ENCODE measurements at regions of chr13 and their contacts with region 1.

Region 1: DNA sequence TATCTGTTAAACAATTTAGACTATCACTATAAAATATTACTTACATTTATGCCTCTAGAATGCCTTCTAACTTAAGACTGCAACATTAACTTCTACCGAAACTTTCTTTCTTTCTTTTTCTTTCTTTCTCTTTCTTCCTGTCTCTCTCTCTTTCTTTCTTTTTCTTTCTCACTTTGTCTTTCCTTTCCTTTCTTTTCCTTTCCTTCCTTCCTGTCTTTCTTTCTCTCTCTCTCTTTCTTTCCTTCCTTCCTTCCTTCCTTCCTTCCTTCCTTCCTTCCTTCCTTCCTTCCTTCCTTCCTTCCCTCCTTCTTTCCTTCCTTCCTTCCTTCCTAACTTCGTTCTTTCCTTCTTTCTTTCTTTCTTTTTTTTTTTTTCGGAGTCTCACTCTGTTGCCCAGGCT is 1071.9 kb upstream of the ATXN8OS start:
- DNase-seq: no peak
- H3K4me3 ChIP-seq: no peak overlapping the region
- H3K27ac ChIP-seq: no peak overlapping the region
- H3K4me1 ChIP-seq: no peaks in the 10 kb centered on the region
- H3K27me3 ChIP-seq: no peaks in the 10 kb centered on the region
- CTCF ChIP-seq: no peak
- POLR2A ChIP-seq: no peak

Region 2: DNA sequence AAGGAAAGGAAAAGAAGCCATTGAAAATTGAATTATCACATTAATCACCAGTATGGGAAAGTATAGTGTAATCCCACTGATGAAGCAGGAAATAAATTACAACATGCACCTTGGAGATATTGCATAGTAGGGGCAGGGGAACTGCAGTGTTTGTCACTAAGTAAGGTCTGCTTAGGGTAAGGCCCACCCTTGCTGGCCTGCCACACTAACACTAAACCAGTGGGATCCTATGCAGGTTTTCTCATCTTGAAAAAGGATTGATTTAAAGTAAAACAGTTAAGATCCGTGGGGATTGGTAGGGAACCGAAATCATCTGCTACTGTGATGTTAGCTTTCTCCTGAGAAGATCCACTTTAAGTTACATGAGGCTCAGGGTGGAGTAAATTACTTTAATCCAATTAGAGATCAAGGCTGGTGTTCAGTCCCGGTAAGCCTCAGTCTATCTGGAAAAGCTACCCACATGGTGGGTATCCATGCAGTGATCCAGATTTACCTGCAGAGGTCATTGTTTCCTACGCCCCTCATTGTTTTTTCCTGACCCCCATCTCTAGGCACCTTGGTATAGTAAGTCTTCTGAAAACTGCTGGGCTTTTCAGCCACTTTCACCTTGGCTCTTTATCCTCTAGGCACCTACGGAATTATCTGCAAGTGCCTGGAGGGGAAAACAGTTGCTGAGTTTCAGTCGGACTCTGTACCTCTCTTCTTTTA is 57.0 kb after region 1 on chr13:
- CTCF ChIA-PET with region 1: no interaction called
- POLR2A ChIA-PET with region 1: no interaction called
- dilution Hi-C with region 1: no loop called
- intact Hi-C with region 1: loop called (anchors 10 kb)
- DNase-seq: no peak
- H3K4me3 ChIP-seq: no peak overlapping the region
- H3K27ac ChIP-seq: no peak overlapping the region
- H3K4me1 ChIP-seq: no peaks in the 10 kb centered on the region
- H3K27me3 ChIP-seq: no peaks in the 10 kb centered on the region
- CTCF ChIP-seq: no peak
- POLR2A ChIP-seq: no peak

Region 3: DNA sequence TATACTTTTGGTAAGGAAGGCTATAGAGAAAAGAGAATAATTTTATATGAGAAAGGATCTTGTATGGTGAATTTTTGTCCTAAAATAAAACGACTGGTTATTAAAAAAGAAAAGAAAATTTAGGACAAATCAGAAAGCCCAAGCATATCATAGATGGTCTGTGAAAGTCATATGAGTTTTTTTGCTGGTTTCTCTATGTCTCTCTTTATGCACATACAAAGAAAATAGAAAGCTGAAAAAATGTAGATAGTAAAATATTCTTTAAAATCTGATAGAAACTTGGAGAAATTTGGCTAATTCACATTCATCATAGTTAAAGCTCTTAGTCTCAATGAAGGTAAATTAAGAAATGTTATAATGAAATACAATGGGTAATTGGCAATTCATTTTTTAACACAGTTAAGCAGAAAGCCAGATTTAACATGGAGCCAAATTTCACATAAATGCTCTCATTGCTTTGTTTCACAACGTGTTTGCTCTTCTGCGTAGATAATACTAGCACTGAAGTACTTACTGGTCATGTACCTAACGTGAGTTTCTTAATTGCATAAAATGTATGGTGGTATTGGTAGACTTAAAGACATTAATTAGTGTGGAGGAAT is 450.3 kb after region 1 on chr13:
- CTCF ChIA-PET with region 1: no interaction called
- POLR2A ChIA-PET with region 1: no interaction called
- dilution Hi-C with region 1: no loop called
- intact Hi-C with region 1: no loop called
- DNase-seq: no peak
- H3K4me3 ChIP-seq: no peak overlapping the region
- H3K27ac ChIP-seq: no peak overlapping the region
- H3K4me1 ChIP-seq: no peaks in the 10 kb centered on the region
- H3K27me3 ChIP-seq: no peaks in the 10 kb centered on the region
- CTCF ChIP-seq: no peak
- POLR2A ChIP-seq: no peak